H1 (cell line): ENCODE measurements at regions of chr11 and their contacts with region 1.

Region 1: DNA sequence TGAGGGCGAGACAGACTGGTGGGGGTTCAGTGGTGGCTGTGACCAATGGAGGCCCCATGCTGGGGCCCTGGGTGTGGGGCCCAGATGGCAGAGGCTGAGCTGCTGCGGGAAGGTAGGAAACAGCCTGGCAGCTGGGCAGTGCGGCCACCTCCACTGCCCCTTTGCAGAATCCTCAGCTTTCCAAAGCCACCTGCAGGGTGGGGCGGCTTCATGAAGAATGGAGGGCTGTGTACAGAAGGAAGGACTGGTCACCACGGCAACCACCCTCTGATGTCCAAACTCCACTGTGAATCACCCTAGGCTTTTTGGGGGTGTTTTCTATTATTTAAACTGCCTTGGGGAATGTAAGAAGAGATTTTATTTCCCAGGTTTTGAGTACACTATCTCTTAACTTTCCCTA is 166.3 kb upstream of the NAV2 start:
- DNase-seq: no peak
- H3K4me3 ChIP-seq: no peak overlapping the region
- H3K27ac ChIP-seq: no peak overlapping the region
- H3K4me1 ChIP-seq: no peaks in the 10 kb centered on the region; a peak in 2 of 7 replicates
- H3K27me3 ChIP-seq: no peaks in the 10 kb centered on the region
- CTCF ChIP-seq: no peak
- EP300 ChIP-seq: no peak
- POLR2A ChIP-seq: no peak
- RAD21 ChIP-seq: no peak

Region 2: DNA sequence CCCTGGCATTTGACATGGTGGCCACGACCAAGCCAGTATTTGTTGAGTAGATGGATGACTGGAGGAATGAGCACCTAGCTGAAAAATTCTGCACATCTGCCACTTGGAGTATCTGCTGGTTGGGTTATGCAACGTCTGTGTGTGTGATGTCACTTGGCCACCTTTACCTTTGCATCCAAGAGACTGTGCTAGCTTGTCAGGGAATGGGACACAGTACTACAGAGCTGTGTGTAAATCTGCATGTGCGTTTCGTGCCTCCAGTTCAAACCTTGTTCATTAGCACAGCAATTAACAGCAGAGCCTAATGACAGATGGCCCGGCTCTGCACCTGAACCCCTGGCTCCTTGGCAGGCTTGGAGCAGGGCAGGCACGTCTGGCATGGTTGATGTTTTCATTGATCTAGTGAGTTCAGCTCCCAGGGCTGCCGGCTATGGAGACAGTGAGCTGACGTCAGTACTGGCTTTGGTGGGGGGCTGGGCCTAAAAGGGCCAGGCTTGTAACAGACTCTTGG is 22.1 kb before region 1 on chr11:
- CTCF ChIA-PET with region 1: interaction called, 13 read pairs
- POLR2A ChIA-PET with region 1: no interaction called
- DNase-seq: no peak
- H3K4me3 ChIP-seq: no peak overlapping the region
- H3K27ac ChIP-seq: no peak overlapping the region
- H3K4me1 ChIP-seq: no peaks in the 10 kb centered on the region; a peak in 3 of 7 replicates
- H3K27me3 ChIP-seq: no peaks in the 10 kb centered on the region
- CTCF ChIP-seq: no peak
- EP300 ChIP-seq: no peak
- POLR2A ChIP-seq: no peak
- RAD21 ChIP-seq: no peak

Region 3: DNA sequence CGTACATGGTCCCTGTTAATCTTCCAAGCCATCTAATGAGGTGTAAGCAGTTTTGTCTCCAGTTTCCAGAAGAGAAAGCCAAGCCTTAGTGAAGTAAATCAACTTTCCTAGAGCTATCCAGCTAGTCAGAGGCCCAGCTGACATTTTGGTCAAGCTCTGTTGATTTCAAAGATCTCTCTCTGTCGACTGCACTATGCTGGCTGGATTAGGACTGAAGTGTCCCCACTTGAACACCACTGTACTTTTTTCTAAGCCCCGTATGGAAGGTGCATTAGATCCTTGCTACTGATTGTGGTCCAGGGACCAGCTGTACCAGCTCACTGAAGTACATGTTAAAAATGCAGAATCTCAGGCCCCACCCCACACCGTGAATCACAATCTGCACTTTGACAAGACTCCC is 10.2 kb before region 1 on chr11:
- CTCF ChIA-PET with region 1: interaction called, 10 read pairs
- POLR2A ChIA-PET with region 1: no interaction called
- DNase-seq: no peak
- H3K4me3 ChIP-seq: no peak overlapping the region
- H3K27ac ChIP-seq: no peak overlapping the region
- H3K4me1 ChIP-seq: peaks cover 0 to 3% (median 0%) of the 10 kb centered on the region in 4 experiments; a peak in 4 of 7 replicates
- H3K27me3 ChIP-seq: no peaks in the 10 kb centered on the region
- CTCF ChIP-seq: no peak
- EP300 ChIP-seq: no peak
- POLR2A ChIP-seq: no peak
- RAD21 ChIP-seq: no peak